ENCODE measurements at regions of chr2 and their contacts with region 1.

Region 1: DNA sequence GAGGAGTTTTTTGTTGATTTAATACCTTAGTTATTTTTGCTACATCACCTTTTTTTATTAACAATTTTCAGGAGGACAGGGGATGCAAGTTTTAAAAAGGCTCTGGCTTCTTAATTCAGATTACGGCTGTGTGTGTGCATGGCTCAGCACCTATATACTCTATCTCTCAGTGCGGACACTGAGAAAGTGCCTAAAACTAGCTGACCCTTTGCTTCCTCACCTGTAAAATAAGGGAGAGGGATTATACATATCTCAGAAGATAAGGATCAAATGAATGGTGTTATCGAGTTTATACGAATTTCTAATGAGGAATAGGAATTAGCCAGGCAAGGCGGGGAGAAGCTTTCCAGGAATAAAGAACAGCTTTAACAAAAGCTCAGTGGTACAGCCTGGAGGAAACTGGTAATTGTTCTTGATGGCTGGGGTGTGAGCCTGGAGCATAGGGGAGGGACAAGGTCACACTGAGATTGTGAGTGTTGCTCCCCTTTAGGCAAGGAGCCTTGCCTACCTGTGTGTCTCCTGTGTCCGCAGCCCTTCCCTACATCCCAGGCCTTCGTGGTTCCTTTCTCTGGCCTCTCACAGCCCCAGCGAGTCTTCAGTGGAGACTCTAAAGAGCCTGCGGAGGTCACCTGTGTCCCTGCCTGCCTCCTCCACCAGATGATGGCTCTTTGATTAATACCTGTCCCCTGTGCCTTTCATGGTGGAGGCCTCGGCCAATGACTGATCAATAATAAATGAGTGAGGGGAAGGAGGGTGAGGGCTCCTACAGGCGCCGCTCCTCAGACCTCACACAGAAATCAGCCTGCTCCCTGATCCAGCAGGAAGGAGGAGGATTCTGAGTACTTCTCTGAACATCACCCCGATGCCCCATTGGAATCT is 92.7 kb downstream of the DDX1 start:
- DNase-seq: no peak
- ATAC-seq: no peak
- H3K4me3 ChIP-seq: no peak overlapping the region
- H3K4me3 Mint-ChIP-seq: no peak overlapping the region
- H3K27ac ChIP-seq: no peak overlapping the region
- H3K27ac Mint-ChIP-seq: no peak overlapping the region
- H3K4me1 ChIP-seq: no peaks in the 10 kb centered on the region
- H3K4me1 Mint-ChIP-seq: no peaks in the 10 kb centered on the region
- H3K27me3 ChIP-seq: no peaks in the 10 kb centered on the region
- H3K27me3 Mint-ChIP-seq: peaks cover 13% of the 10 kb centered on the region
- CTCF ChIP-seq: no peak

Region 2: DNA sequence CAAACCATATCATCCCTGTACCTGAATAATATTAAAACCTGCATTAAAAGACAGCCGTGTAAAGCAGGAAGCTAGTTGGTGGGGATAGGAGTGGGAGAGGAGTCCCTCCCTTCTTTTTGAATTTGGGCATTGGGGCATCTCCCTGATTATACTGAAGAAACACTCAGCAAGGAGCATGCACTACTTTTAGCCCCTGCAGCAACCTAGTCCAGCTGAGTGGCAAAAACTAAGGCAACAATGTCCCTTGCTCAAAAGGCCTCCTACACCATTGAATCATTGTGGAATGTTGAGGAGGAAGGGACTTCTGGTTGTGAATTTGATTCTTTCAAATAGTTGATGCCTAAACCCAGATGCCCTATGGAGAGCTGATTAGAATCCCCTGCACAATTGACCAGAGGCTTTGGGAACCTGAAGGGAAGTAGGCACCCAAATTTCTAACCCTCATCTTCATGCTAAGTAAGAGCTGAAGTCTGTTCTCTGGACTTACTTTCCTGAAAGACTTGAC is 19.0 kb after region 1 on chr2:
- CTCF ChIA-PET with region 1: no interaction called
- POLR2A ChIA-PET with region 1: no interaction called
- intact Hi-C with region 1: loop called in 1 of 2 experiments (anchors 1 kb)
- DNase-seq: no peak
- ATAC-seq: no peak
- H3K4me3 ChIP-seq: no peak overlapping the region
- H3K4me3 Mint-ChIP-seq: no peak overlapping the region
- H3K27ac ChIP-seq: no peak overlapping the region
- H3K27ac Mint-ChIP-seq: no peak overlapping the region
- H3K4me1 ChIP-seq: no peaks in the 10 kb centered on the region
- H3K4me1 Mint-ChIP-seq: no peaks in the 10 kb centered on the region
- H3K27me3 ChIP-seq: no peaks in the 10 kb centered on the region
- H3K27me3 Mint-ChIP-seq: peaks cover 6% of the 10 kb centered on the region
- CTCF ChIP-seq: no peak

Measured in CD4-positive, alpha-beta T cell (primary cell).